Stomach (tissue), 19 donors: ENCODE measurements at regions of chr10 and their contacts with region 1.

Region 1: DNA sequence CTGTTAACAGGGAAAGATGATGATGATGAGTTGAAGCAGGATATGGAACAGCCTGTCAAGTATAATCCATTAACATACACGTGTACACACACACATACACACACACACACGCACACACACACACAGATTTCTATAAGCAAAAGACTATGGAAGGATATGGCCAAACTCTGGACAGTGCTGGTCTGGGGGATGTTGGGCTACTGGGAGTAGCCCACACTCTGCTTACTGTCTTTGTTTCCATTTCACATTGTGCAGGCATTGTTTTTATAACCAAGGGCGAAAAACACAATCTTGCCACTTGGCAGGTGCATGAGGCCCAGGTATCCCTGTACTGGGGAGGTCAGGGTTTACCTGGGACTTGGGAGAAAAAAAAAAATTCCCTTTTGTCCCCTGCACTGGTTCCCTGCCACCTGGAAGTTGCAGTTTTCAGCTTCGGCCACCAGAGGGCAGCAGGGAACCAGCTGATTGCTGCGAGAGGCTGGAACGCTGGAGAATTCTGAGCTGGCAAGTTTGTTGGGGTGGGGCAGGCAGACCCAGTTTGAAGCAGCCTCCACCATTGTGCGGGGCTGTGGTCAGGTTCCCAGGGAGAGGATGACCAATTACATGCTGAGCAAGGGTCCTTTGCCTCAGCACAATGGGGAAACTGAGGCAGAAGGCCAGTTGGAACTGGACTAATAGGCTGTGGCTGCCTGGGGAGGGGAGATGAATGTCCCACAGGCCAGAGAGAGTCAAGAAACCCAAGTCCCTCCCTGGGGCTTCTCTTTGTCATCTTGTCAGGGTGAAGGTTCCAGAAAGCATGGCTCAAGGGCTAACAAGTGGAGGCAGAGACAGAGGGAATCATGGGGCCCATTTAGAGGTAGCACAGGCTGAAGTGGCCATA is 27.3 kb downstream of the PPIF start:
- DNase-seq: peak; percentile 89 to 94
- H3K4me3 ChIP-seq: no peak overlapping the region
- H3K27ac ChIP-seq: no peak overlapping the region
- H3K4me1 ChIP-seq: peaks cover 10 to 26% (median 18%) of the 10 kb centered on the region in 4 donors
- H3K27me3 ChIP-seq: no peaks in the 10 kb centered on the region
- CTCF ChIP-seq: peak in 6 of 7 experiments; percentile 93 to 99 (median 96)
- EP300 ChIP-seq: no peak
- POLR2A ChIP-seq: no peak

Region 2: GRCh38 chr10:79468024-79468560 is 93.5 kb after region 1 on chr10:
- intact Hi-C with region 1: loop called (anchors 5 kb)
- DNase-seq: no peak
- H3K4me3 ChIP-seq: no peak overlapping the region
- H3K27ac ChIP-seq: peak overlapping the region in 2 of 5 donors; percentile 20 to 24
- H3K4me1 ChIP-seq: peaks cover 0 to 16% (median 10%) of the 10 kb centered on the region in 4 donors
- H3K27me3 ChIP-seq: no peaks in the 10 kb centered on the region
- CTCF ChIP-seq: no peak
- EP300 ChIP-seq: no peak
- POLR2A ChIP-seq: no peak

Region 3: DNA sequence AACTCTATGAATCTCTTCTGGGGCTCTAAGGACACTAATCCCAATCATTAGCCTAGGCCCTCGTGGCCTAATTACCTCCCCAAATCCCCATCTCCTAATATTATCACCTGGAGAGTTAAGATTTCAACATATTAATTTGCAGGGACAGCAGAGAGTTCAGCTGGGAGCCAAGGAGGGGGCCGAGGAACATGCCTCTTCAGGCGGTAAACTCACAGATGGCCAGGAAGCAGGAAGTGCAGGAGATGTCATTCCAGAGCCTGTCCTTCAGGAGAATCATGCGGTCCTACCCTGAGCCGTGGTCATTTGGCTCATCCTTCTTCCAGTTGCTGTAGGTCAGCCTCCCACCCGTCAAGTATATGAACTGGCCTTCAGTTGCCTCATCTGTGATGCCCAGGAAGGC is 207.5 kb after region 1 on chr10:
- intact Hi-C with region 1: no loop called
- DNase-seq: no peak
- H3K4me3 ChIP-seq: no peak overlapping the region
- H3K27ac ChIP-seq: no peak overlapping the region
- H3K4me1 ChIP-seq: no peaks in the 10 kb centered on the region
- H3K27me3 ChIP-seq: no peaks in the 10 kb centered on the region
- CTCF ChIP-seq: no peak
- EP300 ChIP-seq: no peak
- POLR2A ChIP-seq: no peak